Activated CD8-positive, alpha-beta memory T cell treated with anti-CD3 and anti-CD28 coated beads, Interleukin-2, amount 10 ng/mL, durations not matched to agents 7 days and 5 days (primary cell): ENCODE measurements at regions of chr2 and their contacts with region 1.

Region 1: GRCh38 chr2:176854878-176855277 is 357.7 kb upstream of the HNRNPA3 start:
- DNase-seq: no peak
- ATAC-seq: peak; percentile 48
- H3K4me3 Mint-ChIP-seq: no peak overlapping the region
- H3K27ac Mint-ChIP-seq: peak overlapping the region; percentile 81
- H3K4me1 Mint-ChIP-seq: peaks cover 67% of the 10 kb centered on the region
- H3K27me3 Mint-ChIP-seq: no peaks in the 10 kb centered on the region

Region 2: DNA sequence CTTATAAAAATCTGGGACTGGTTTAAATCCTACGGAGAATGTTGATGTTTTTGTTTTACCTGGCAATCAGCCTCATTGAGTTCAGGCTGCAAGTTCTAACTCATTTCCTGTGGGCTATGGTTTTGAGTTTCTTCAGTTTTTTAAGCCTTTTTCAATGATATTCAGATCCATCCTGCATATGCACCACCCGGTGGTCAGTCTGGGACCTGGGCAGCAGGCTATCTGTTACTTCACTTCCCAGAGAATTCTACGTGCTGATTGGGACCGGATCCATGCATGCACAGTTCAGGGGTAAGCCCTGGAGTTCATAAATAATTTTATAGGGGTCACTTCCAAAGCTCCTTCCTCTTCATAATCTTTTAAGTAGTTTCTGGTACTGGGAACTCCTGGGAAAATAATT is 18.5 kb after region 1 on chr2:
- CTCF ChIA-PET with region 1: interaction called, 16 read pairs
- DNase-seq: no peak
- ATAC-seq: peak; percentile 39
- H3K4me3 Mint-ChIP-seq: no peak overlapping the region
- H3K27ac Mint-ChIP-seq: no peak overlapping the region
- H3K4me1 Mint-ChIP-seq: peaks cover 37% of the 10 kb centered on the region
- H3K27me3 Mint-ChIP-seq: no peaks in the 10 kb centered on the region

Region 3: GRCh38 chr2:176978921-176979320 is 124.0 kb after region 1 on chr2:
- CTCF ChIA-PET with region 1: no interaction called
- DNase-seq: no peak
- ATAC-seq: no peak
- H3K4me3 Mint-ChIP-seq: no peak overlapping the region
- H3K27ac Mint-ChIP-seq: no peak overlapping the region
- H3K4me1 Mint-ChIP-seq: no peaks in the 10 kb centered on the region
- H3K27me3 Mint-ChIP-seq: peaks cover 16% of the 10 kb centered on the region